Activated T-helper 1 cell treated with anti-CD3 and anti-CD28 coated beads, Interleukin-12 subunit alpha, Interleukin-12 subunit beta, Interleukin-2, Interleukin-4 antibody, amounts not matched to agents 30 ng/mL and 10 ng/mL and 1 ng/mL, durations not matched to agents 14 hours and 24 hours and 36 hours (primary cell): ENCODE measurements at regions of chr11 and their contacts with region 1.

Region 1: DNA sequence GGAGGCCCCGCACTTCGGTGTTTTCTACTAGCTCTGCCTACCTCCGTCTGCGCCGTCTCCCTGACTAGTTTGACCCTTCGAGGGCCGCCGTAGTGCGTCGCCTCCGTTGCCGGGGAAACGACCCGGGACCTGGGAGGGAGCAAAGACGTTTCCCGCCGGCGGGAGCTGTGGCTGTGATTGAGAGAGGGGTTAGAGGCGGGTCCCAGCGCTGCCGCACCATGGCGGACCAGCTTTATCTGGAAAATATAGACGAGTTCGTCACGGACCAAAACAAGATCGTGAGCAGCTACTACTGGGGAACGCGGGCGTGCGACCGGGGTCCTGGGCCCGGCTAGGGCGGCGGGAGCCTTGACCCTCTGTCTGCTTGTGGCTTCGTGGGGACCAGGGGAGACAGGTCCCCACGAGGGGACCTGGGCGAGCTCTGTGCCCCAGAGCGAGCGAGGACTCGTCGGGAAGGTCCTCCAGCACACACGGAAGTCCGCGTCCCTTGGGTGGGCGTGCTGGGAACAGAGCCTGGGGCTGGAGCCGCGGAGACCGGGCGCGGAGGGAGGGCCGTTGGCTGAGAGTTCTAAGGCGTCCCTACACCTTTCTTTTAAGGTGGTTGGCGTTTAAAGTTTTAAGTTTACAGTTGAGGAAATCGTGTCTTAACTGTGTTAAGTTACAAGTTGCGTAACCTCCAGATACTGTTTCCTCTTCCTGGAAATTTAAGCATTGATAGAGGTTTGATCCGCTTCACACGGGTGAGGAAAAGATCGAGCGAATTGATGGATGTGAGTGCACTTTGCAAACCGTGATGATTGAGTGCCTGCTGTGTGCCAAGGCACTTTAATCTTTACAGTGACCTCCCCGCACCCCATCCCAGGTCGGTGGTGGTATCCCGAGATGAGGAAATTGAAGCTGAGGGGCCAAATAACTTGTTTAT is at the start of gene POLD3:
- DNase-seq: peak; percentile 90
- H3K4me3 Mint-ChIP-seq: peak within 1 kb of the TSS; percentile 100
- H3K27ac Mint-ChIP-seq: peak within 1 kb of the TSS; percentile 98
- H3K4me1 Mint-ChIP-seq: peaks cover 30% of the 10 kb centered on the region
- H3K27me3 Mint-ChIP-seq: peaks cover 3% of the 10 kb centered on the region
- total RNA-seq, gene POLD3: 50.1 and 52.7 TPM in 2 replicates

Region 2: DNA sequence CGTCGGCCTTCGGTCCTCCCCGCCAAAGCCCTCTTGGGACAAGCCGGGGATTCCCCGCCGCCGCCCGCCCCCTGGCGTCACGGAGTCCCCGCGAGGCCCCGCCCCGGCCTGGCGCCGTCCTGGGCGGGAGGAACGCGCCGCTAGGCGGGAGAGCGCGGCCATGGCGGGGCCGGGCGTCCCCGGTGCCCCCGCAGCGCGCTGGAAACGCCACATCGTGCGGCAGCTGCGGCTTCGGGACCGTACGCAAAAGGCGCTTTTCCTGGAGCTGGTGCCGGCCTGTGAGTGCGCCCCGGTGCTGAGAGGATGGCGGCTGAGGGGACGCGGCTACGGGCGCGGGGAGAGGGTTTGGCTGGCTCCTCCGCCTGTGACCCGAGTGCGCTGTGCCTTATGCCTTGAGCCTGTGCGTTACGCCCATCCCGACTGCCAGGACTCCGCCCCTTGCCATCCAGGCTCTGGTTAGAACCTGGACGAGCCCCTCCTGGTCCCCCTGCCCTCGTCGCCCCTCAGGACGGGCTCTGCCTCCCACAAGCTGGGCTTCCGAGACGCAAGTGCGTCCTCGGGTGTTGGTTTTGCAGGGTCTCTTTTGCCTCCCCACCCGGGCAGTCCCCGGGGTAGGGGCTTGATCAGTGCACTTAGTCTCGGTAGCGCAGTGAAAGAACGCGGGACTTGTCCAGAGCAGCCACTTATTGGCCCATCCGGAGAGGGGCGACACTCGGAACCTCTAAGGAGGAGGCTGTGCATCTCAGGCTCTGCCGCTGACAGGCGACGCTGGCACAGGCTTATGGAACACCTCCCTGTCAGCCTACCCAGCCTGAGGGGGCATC is 1778.2 kb before region 1 on chr11 and contains the start of gene ATG16L2:
- intact Hi-C with region 1: loop called (anchors 5 kb)
- DNase-seq: peak; percentile 90
- H3K4me3 Mint-ChIP-seq: peak within 1 kb of the TSS; percentile 99
- H3K27ac Mint-ChIP-seq: peak within 1 kb of the TSS; percentile 98
- H3K4me1 Mint-ChIP-seq: peaks cover 54% of the 10 kb centered on the region
- H3K27me3 Mint-ChIP-seq: no peaks in the 10 kb centered on the region
- total RNA-seq, gene ATG16L2: 69.2 and 71.1 TPM in 2 replicates

Region 3: GRCh38 chr11:73876424-73877300 is 716.0 kb before region 1 on chr11 and contains the starts of genes COA4 and PAAF1:
- intact Hi-C with region 1: loop called (anchors 5 kb)
- DNase-seq: peak; percentile 92
- H3K4me3 Mint-ChIP-seq: peak within 1 kb of the TSS; percentile 93
- H3K27ac Mint-ChIP-seq: peak within 1 kb of the TSS; percentile 100
- H3K4me1 Mint-ChIP-seq: peaks cover 30% of the 10 kb centered on the region
- H3K27me3 Mint-ChIP-seq: no peaks in the 10 kb centered on the region
- total RNA-seq, gene COA4: 99.1 and 102 TPM in 2 replicates
- total RNA-seq, gene PAAF1: 22.4 and 25.0 TPM in 2 replicates

Region 4: GRCh38 chr11:74492974-74493790 is 99.5 kb before region 1 on chr11 and contains the start of gene LIPT2:
- intact Hi-C with region 1: loop called (anchors 1 kb)
- DNase-seq: peak; percentile 96
- H3K4me3 Mint-ChIP-seq: peak within 1 kb of the TSS; percentile 86
- H3K27ac Mint-ChIP-seq: peak within 1 kb of the TSS; percentile 83
- H3K4me1 Mint-ChIP-seq: peaks cover 21% of the 10 kb centered on the region
- H3K27me3 Mint-ChIP-seq: peaks cover 8% of the 10 kb centered on the region
- total RNA-seq, gene LIPT2: 2.7 and 3.4 TPM in 2 replicates

Region 5: DNA sequence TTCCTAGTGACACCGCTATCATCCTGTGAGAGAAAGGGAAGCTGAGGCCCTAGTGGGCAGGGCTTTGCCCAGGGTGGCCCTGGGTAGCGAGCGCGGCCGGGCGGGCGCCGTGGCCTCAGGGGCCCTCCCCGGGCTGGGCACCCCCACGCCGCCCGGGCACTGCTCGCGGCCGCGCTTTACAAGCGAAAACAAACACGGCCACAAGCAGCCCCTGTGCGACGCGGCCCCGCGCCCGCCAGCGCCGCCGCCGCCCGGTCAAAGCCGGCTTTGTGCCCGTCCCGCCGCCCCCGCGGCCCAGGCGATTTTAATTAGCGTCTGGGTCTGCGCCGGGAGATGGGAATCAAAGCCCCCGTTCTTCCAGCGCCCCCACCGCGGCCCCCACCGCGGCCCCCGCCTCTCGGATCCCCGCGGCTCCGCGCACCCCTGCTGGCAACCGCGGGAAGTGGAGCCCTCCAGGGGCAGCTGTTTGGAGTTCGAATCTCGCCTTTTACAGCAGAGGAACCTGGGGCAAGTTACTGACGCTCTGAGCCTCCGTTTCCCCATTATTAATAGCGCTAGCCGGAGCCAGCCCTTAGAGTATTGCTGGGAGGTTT is 90.7 kb after region 1 on chr11:
- intact Hi-C with region 1: no loop called
- DNase-seq: no peak
- H3K4me3 Mint-ChIP-seq: no peak overlapping the region
- H3K27ac Mint-ChIP-seq: no peak overlapping the region
- H3K4me1 Mint-ChIP-seq: no peaks in the 10 kb centered on the region
- H3K27me3 Mint-ChIP-seq: peaks cover 28% of the 10 kb centered on the region

Region 6: GRCh38 chr11:74748211-74749127 is 155.8 kb after region 1 on chr11 and contains the start of gene RNF169:
- intact Hi-C with region 1: loop called (anchors 2 kb)
- DNase-seq: peak; percentile 85
- H3K4me3 Mint-ChIP-seq: peak within 1 kb of the TSS; percentile 98
- H3K27ac Mint-ChIP-seq: peak within 1 kb of the TSS; percentile 90
- H3K4me1 Mint-ChIP-seq: peaks cover 30% of the 10 kb centered on the region
- H3K27me3 Mint-ChIP-seq: peaks cover 4% of the 10 kb centered on the region
- total RNA-seq, gene RNF169: 14.8 and 15.3 TPM in 2 replicates

Region 7: DNA sequence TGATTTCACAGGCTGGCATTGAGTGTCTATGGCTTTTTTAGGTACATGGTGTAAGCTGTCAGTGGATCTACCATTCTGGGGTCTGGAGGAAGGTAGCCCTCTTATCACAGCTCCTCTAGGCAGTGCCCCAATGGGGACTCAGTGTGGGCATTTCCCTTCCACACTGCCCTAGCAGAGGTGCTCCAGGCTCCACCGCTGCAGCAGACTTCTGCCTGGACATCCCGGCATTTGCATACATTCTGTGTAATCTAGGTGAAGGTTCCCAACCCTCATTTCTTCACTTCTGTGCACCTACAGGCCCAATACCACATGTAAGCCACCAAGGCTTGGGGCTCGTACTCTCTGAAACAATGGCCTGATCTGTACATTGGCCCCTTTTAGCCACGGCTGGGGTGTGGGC is 234.2 kb after region 1 on chr11:
- intact Hi-C with region 1: no loop called
- DNase-seq: no peak
- H3K4me3 Mint-ChIP-seq: no peak overlapping the region
- H3K27ac Mint-ChIP-seq: no peak overlapping the region
- H3K4me1 Mint-ChIP-seq: peaks cover 6% of the 10 kb centered on the region
- H3K27me3 Mint-ChIP-seq: no peaks in the 10 kb centered on the region

Region 8: GRCh38 chr11:74988541-74989260 is 396.0 kb after region 1 on chr11 and contains the start of gene NEU3:
- intact Hi-C with region 1: loop called (anchors 2 kb)
- DNase-seq: peak; percentile 79
- H3K4me3 Mint-ChIP-seq: peak within 1 kb of the TSS; percentile 94
- H3K27ac Mint-ChIP-seq: peak within 1 kb of the TSS; percentile 81
- H3K4me1 Mint-ChIP-seq: peaks cover 30% of the 10 kb centered on the region
- H3K27me3 Mint-ChIP-seq: no peaks in the 10 kb centered on the region
- total RNA-seq, gene NEU3: 16.3 and 16.9 TPM in 2 replicates

Region 9: GRCh38 chr11:75241036-75241905 is 648.6 kb after region 1 on chr11:
- intact Hi-C with region 1: loop called (anchors 10 kb)
- DNase-seq: peak; percentile 89
- H3K4me3 Mint-ChIP-seq: peak overlapping the region; percentile 58
- H3K27ac Mint-ChIP-seq: no peak overlapping the region
- H3K4me1 Mint-ChIP-seq: peaks cover 6% of the 10 kb centered on the region
- H3K27me3 Mint-ChIP-seq: peaks cover 52% of the 10 kb centered on the region